ENCODE measurements at regions of chr14 and their contacts with region 1.

Region 1: DNA sequence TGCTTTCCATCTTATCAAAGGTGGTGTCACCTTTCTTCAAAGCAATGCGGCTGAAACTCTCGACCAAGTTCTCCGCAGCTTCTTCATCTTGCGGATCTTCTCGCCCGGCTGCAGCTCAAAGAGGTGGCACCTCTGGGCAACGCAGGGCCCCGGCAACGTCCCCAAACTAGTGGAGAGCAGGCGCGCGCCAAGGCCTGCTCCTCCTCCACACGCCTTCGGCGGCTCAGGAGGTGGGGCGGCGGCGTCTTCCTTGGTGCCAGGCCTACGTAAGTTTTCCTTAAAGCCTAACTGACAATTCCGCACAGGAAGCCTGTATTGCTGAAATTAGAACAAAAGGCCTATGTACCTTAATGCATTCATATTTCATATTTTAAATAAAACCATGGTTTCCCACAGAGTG is 112.0 kb downstream of the TMX1 start:
- DNase-seq: no peak
- ATAC-seq: no peak
- H3K4me3 ChIP-seq: no peak overlapping the region
- H3K27ac ChIP-seq: no peak overlapping the region
- H3K4me1 ChIP-seq: no peaks in the 10 kb centered on the region
- H3K27me3 ChIP-seq: no peaks in the 10 kb centered on the region
- CTCF ChIP-seq: no peak

Region 2: DNA sequence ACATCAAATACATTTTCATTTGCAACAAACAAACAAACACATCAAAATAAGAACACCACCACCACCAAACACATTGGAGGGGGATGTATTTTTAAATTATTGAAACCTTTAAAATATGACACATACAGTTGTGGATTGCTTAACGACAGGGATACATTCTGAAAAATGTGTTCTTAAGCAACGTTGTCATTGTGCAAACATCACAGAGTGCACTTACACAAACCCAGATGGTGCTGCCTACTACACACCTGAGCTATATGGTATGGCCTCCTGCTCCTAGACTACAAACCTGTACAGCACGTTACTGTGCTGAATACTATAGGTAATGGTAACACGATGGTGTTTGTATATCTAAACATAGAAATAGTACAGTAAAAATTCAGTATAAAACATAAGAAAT is 427.1 kb before region 1 on chr14:
- CTCF ChIA-PET with region 1: interaction called, 15 read pairs
- POLR2A ChIA-PET with region 1: no interaction called
- intact Hi-C with region 1: no loop called
- DNase-seq: peak; percentile 20
- ATAC-seq: peak; percentile 22; the same call in 1 of the 2 replicates
- H3K4me3 ChIP-seq: no peak overlapping the region
- H3K27ac ChIP-seq: no peak overlapping the region
- H3K4me1 ChIP-seq: no peaks in the 10 kb centered on the region
- H3K27me3 ChIP-seq: no peaks in the 10 kb centered on the region
- CTCF ChIP-seq: no peak